PC-9 (cell line): ENCODE measurements at regions of chr18 and their contacts with region 1.

Region 1: GRCh38 chr18:54224379-54225014 is at the start of gene MBD2:
- DNase-seq: peak; percentile 83 to 89
- H3K4me3 ChIP-seq: peak within 1 kb of the TSS; percentile 56
- H3K27ac ChIP-seq: peak within 1 kb of the TSS; percentile 87
- H3K4me1 ChIP-seq: peaks cover 32% of the 10 kb centered on the region
- H3K27me3 ChIP-seq: no peaks in the 10 kb centered on the region
- CTCF ChIP-seq: no peak
- total RNA-seq, gene MBD2: 72.0 and 80.9 TPM in 2 replicates

Region 2: GRCh38 chr18:54119524-54120019 is 104.9 kb before region 1 on chr18:
- CTCF ChIA-PET with region 1: no interaction called
- POLR2A ChIA-PET with region 1: no interaction called
- intact Hi-C with region 1: no loop called
- DNase-seq: peak; percentile 2 to 51
- H3K4me3 ChIP-seq: no peak overlapping the region
- H3K27ac ChIP-seq: no peak overlapping the region
- H3K4me1 ChIP-seq: no peaks in the 10 kb centered on the region
- H3K27me3 ChIP-seq: no peaks in the 10 kb centered on the region
- CTCF ChIP-seq: peak; percentile 86

Region 3: DNA sequence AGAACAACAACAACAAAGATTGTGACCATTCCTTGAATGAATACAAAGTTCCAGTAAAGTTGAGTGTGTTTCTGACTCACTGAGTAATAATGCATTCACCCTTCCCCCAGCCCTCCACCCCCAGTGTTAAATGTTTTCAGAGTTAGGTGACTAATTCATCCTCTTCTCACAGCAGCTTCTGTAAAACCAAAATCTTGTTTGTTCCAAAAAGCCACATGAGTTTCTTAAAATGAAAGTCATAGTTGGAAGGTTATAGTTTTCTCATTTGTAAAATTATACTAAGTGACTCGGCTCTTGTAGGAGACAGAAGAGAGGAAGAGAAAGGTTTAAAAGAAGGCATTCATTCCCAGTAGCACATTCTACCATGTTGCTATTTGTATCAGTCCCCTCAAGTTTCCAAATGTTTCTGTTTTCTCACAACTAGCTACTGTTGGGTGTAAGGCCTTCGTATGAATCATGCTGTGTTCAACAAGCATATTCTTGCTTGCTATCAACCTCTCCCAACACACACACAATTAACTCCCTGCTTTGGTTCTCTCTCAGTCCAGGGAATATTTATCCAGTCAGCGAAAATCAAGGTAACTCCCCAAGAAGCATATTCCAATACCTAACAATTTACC is 75.3 kb before region 1 on chr18:
- CTCF ChIA-PET with region 1: no interaction called
- POLR2A ChIA-PET with region 1: no interaction called
- intact Hi-C with region 1: loop called (anchors 1 kb)
- DNase-seq: peak; percentile 47 to 91
- H3K4me3 ChIP-seq: peak overlapping the region; percentile 36; the same call in 1 of the 2 replicates
- H3K27ac ChIP-seq: peak overlapping the region; percentile 89
- H3K4me1 ChIP-seq: peaks cover 32% of the 10 kb centered on the region
- H3K27me3 ChIP-seq: no peaks in the 10 kb centered on the region
- CTCF ChIP-seq: no peak

Region 4: DNA sequence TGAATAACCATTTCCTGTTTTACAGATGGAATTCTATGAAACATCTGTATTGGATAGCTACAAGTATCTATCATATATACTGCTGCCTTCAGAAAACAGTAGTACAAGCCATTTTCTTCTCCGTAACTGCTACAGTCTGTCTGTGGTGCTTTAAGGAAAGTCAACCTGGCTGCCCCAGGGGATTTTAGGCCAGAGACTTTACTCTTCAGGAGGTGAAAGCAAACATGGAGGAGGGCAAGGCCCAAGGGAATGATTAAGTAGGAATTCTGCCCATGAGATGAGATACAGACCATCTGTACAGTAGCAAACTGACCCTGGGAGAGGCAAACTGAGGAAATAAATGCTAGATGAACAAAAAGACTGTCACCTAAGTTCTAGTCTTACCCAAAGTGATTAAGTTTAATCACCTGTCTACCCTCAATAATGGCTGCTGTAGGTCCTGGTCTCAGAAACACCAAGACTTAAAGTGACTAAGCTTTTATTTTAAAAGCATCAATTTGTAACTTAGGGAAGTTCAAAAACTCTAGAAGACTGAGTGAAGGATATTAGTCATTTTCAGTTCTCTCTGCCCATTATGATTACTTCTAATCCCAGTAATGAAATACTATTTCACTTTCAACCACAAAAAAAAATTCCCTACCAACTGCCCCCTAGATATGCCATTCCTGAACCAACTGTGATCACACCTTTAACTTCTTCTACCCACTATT is 14.9 kb before region 1 on chr18:
- CTCF ChIA-PET with region 1: no interaction called
- POLR2A ChIA-PET with region 1: interaction called, 10 read pairs
- intact Hi-C with region 1: no loop called
- DNase-seq: no peak
- H3K4me3 ChIP-seq: no peak overlapping the region
- H3K27ac ChIP-seq: peak overlapping the region; percentile 28; the same call in 1 of the 2 replicates
- H3K4me1 ChIP-seq: no peaks in the 10 kb centered on the region
- H3K27me3 ChIP-seq: no peaks in the 10 kb centered on the region
- CTCF ChIP-seq: no peak

Region 5: GRCh38 chr18:54357660-54358494 is 133.4 kb after region 1 on chr18 and contains the starts of genes C18orf54 and STARD6:
- CTCF ChIA-PET with region 1: interaction called, 3 read pairs
- POLR2A ChIA-PET with region 1: no interaction called
- intact Hi-C with region 1: loop called (anchors 2 kb)
- DNase-seq: peak; percentile 76 to 78
- H3K4me3 ChIP-seq: peak within 1 kb of the TSS; percentile 93
- H3K27ac ChIP-seq: peak within 1 kb of the TSS; percentile 18; the same call in 1 of the 2 replicates
- H3K4me1 ChIP-seq: peaks cover 13% of the 10 kb centered on the region
- H3K27me3 ChIP-seq: no peaks in the 10 kb centered on the region
- CTCF ChIP-seq: peak; percentile 53; the same call in 1 of the 2 replicates
- total RNA-seq, gene C18orf54: 6.7 and 7.6 TPM in 2 replicates
- total RNA-seq, gene STARD6: not detected in 2 replicates